ENCODE measurements at regions of chr9 and their contacts with region 1.

Region 1: DNA sequence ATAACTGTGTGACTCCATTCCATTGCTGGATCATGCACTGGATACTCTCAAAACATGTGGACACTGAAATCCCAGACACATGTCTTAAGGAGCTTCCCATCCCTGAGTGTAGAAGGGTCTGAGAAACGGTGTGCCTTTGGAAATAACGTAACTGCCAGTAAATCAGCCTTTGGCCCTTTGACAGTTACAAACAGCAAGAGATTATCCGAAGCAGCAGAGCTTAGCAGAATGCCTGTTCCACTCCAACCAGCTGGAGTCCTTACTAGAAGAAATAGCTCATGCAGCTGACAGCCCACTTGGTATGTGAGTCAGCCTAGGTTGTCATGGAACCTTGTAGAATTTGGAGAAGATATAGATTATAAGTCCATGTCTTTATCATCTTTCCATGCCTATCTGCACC is 7.0 kb downstream of the TMEM252 start:
- DNase-seq: no peak
- ATAC-seq: no peak
- H3K4me3 ChIP-seq: no peak overlapping the region
- H3K27ac ChIP-seq: no peak overlapping the region
- H3K4me1 ChIP-seq: no peaks in the 10 kb centered on the region
- H3K27me3 ChIP-seq: peaks cover 2 to 3% of the 10 kb centered on the region in 2 experiments; a peak in 2 of 4 replicates
- CTCF ChIP-seq: no peak
- EP300 ChIP-seq: no peak
- POLR2A ChIP-seq: no peak
- RAD21 ChIP-seq: no peak

Region 2: DNA sequence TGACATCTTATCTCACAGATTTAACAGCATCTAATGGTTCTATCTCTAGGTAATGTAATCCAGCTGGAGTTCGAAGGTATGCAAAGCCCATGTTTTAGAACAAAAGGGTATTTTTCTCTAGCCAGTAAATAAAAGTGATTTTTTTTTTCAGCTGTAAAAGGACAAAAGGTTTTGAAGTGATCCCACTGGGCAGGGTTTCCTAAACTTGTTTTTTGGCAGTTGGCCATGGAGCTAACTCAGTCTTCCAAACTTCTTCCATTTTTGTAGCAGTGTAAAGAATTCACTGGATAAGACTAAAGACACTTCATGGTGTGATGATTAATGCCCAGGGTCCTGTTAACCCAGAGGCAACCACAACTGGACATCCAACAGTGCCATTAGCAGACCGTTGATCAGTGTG is 56.8 kb before region 1 on chr9:
- CTCF ChIA-PET with region 1: no interaction called
- POLR2A ChIA-PET with region 1: no interaction called
- RAD21 ChIA-PET with region 1: no interaction called
- SMC1A ChIA-PET with region 1: no interaction called
- in situ Hi-C with region 1: no loop called
- intact Hi-C with region 1: no loop called
- DNase-seq: no peak
- ATAC-seq: no peak
- H3K4me3 ChIP-seq: no peak overlapping the region
- H3K27ac ChIP-seq: no peak overlapping the region
- H3K4me1 ChIP-seq: no peaks in the 10 kb centered on the region
- H3K27me3 ChIP-seq: peaks cover 0 to 4% of the 10 kb centered on the region in 2 experiments; a peak in 2 of 4 replicates
- CTCF ChIP-seq: no peak
- EP300 ChIP-seq: no peak
- POLR2A ChIP-seq: no peak
- RAD21 ChIP-seq: no peak

Region 3: DNA sequence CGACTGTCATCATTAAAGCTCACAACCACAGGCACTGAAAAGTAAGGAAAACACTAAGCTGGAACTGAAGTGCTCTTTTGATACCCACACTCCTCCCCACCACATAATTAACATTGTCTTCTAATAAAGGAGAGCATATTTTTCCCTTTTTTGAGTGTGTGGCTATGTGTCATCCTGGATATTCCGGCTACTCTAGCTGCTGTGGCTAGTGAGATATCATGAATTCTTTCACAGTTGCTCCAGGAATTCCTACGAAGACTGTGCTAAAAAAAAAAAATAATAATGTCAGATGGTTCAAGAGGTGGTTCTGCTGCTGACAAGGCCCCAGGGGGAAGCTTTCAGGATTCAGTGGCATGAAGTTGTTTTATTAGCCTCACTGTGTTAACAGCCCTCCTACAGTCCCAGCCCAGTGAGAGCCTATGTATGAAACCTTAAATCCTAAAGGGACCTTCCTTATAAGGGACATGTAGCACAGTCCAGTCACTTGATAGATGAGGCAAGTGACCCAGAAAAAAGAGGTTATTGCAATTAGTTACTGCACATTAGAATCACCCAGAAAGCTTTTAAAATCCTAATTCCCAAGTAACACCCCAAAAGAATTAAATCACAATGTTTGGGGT is 39.6 kb before region 1 on chr9:
- CTCF ChIA-PET with region 1: no interaction called
- POLR2A ChIA-PET with region 1: no interaction called
- RAD21 ChIA-PET with region 1: no interaction called
- SMC1A ChIA-PET with region 1: no interaction called
- in situ Hi-C with region 1: no loop called
- intact Hi-C with region 1: no loop called
- DNase-seq: no peak
- ATAC-seq: no peak
- H3K4me3 ChIP-seq: no peak overlapping the region
- H3K27ac ChIP-seq: no peak overlapping the region
- H3K4me1 ChIP-seq: no peaks in the 10 kb centered on the region
- H3K27me3 ChIP-seq: peaks cover 2 to 11% of the 10 kb centered on the region in 2 experiments; a peak in 3 of 4 replicates
- CTCF ChIP-seq: no peak
- EP300 ChIP-seq: no peak
- POLR2A ChIP-seq: no peak
- RAD21 ChIP-seq: no peak

Region 4: GRCh38 chr9:68546596-68547390 is 13.1 kb after region 1 on chr9:
- CTCF ChIA-PET with region 1: interaction called, 4 read pairs
- POLR2A ChIA-PET with region 1: no interaction called
- RAD21 ChIA-PET with region 1: no interaction called
- SMC1A ChIA-PET with region 1: no interaction called
- in situ Hi-C with region 1: no loop called
- intact Hi-C with region 1: loop called (anchors 1 kb)
- DNase-seq: peak; percentile 86
- ATAC-seq: peak; percentile 93
- H3K4me3 ChIP-seq: peak overlapping the region; percentile 3; the same call in 1 of the 2 replicates
- H3K27ac ChIP-seq: peak overlapping the region; percentile 88
- H3K4me1 ChIP-seq: peaks cover 29% of the 10 kb centered on the region
- H3K27me3 ChIP-seq: no peaks in the 10 kb centered on the region; a peak in 2 of 4 replicates
- CTCF ChIP-seq: no peak
- EP300 ChIP-seq: peak; percentile 66 to 73
- POLR2A ChIP-seq: no peak
- RAD21 ChIP-seq: no peak

Region 5: GRCh38 chr9:68584189-68585033 is 50.7 kb after region 1 on chr9:
- CTCF ChIA-PET with region 1: no interaction called
- POLR2A ChIA-PET with region 1: no interaction called
- RAD21 ChIA-PET with region 1: no interaction called
- SMC1A ChIA-PET with region 1: no interaction called
- in situ Hi-C with region 1: no loop called
- intact Hi-C with region 1: no loop called
- DNase-seq: peak; percentile 58
- ATAC-seq: peak; percentile 100
- H3K4me3 ChIP-seq: no peak overlapping the region
- H3K27ac ChIP-seq: no peak overlapping the region
- H3K4me1 ChIP-seq: no peaks in the 10 kb centered on the region
- H3K27me3 ChIP-seq: no peaks in the 10 kb centered on the region
- CTCF ChIP-seq: peak; percentile 99 to 100 (median 100); a peak in 5 of 6 replicates
- EP300 ChIP-seq: no peak
- POLR2A ChIP-seq: no peak
- RAD21 ChIP-seq: peak; percentile 100

Measured in GM12878 (cell line).